ENCODE measurements at regions of chr15 and their contacts with region 1.

Region 1: GRCh38 chr15:82809404-82810060 is at the start of gene WHAMM:
- DNase-seq: peak; percentile 95
- H3K4me3 Mint-ChIP-seq: peak within 1 kb of the TSS; percentile 92
- H3K27ac Mint-ChIP-seq: peak within 1 kb of the TSS; percentile 94
- H3K4me1 Mint-ChIP-seq: peaks cover 34% of the 10 kb centered on the region
- H3K27me3 Mint-ChIP-seq: peaks cover 19% of the 10 kb centered on the region
- total RNA-seq, gene WHAMM: 7.1 and 7.5 TPM in 2 replicates

Region 2: DNA sequence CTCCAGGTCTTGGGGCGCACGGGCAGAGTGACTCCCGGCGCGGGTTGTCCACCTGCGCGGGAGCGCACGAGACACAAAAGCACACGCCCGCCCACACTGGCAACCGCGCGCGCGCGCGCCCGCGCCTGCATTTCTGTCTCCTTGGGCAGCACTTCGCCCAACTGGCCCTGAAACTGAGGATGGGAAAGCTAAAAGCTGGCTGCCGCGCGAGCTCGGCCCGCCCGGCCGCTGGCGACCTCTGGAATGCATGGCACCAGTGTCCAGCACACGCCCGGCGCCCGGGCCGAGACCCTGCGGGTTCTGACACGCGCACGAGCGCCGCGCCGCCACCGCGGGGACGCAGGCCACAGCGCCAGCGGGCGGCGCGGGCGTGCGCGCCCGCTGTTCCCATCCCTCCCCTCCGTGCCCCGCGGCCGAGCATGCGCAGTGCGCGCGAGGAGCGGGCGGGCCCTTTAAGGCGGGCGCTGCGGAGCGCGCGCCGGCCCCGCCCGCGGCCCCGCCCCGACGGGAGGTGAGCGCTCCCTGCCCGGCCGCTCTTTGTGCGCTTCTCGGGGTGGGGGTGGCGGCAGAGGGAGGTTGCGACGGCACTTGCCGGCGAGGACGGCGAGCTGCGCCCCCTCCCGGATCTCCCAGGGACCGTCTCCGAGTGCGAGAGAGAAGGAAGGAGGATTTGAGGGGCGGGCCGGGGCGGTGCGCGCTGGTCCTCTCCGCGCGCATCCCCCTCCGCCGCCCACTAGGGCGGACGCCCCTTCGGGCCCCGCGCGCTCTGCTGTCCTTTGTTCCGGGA is 762.7 kb before region 1 on chr15:
- intact Hi-C with region 1: loop called (anchors 2 kb)
- DNase-seq: peak; percentile 85
- H3K4me3 Mint-ChIP-seq: peak overlapping the region; percentile 89
- H3K27ac Mint-ChIP-seq: peak overlapping the region; percentile 79
- H3K4me1 Mint-ChIP-seq: peaks cover 12% of the 10 kb centered on the region
- H3K27me3 Mint-ChIP-seq: peaks cover 45% of the 10 kb centered on the region

Region 3: DNA sequence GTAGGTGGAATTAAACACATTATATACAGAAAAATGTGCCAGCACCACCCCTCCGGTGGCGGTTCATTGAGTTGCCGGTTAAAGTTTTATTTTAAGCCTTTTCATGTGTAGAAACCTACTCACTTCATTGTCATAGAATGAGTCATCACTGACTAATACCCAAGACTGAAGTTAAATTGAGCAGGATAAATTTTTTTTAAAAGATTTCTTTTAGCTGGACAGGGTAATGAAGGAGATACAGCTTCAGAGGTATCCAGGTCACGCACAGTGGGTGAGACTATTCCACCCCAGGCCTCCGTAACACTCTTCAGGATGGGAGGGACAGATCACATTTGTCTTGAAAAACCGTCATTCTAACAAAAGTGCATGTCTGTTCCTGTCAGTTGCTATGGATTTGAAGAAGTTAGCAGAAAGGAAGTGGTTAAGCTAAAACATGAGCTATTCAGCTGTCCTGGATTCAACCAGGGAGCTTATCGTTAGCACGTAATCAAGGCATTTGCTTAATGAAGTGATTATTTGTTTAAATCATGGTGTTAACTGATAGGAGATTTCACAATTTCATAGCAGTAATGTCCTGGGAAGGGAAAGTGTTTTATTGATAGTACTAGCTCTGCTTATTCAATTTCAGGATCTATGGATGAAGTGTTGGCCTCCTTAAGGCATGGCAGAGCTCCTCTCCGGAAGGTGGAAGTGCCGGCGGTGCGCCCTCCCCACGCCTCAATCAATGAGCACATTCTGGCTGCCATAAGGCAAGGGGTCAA is 23.2 kb after region 1 on chr15:
- intact Hi-C with region 1: loop called (anchors 1 kb)
- DNase-seq: peak; percentile 17
- H3K4me3 Mint-ChIP-seq: peak overlapping the region; percentile 57
- H3K27ac Mint-ChIP-seq: peak overlapping the region; percentile 87
- H3K4me1 Mint-ChIP-seq: peaks cover 54% of the 10 kb centered on the region
- H3K27me3 Mint-ChIP-seq: peaks cover 2% of the 10 kb centered on the region

Region 4: GRCh38 chr15:82985688-82986441 is 176.3 kb after region 1 on chr15 and contains the start of gene RAMAC:
- intact Hi-C with region 1: loop called (anchors 2 kb)
- DNase-seq: peak; percentile 86
- H3K4me3 Mint-ChIP-seq: peak within 1 kb of the TSS; percentile 98
- H3K27ac Mint-ChIP-seq: peak within 1 kb of the TSS; percentile 73
- H3K4me1 Mint-ChIP-seq: peaks cover 25% of the 10 kb centered on the region
- H3K27me3 Mint-ChIP-seq: no peaks in the 10 kb centered on the region
- total RNA-seq, gene RAMAC: 26.1 and 27.3 TPM in 2 replicates

Region 5: GRCh38 chr15:83066734-83067637 is 257.5 kb after region 1 on chr15 and contains the start of gene BTBD1:
- intact Hi-C with region 1: loop called (anchors 5 kb)
- DNase-seq: peak; percentile 84
- H3K4me3 Mint-ChIP-seq: peak within 1 kb of the TSS; percentile 84
- H3K27ac Mint-ChIP-seq: peak within 1 kb of the TSS; percentile 83
- H3K4me1 Mint-ChIP-seq: peaks cover 32% of the 10 kb centered on the region
- H3K27me3 Mint-ChIP-seq: peaks cover 2% of the 10 kb centered on the region
- total RNA-seq, gene BTBD1: 61.7 and 61.8 TPM in 2 replicates

Region 6: GRCh38 chr15:83928392-83928734 is 1118.8 kb after region 1 on chr15:
- intact Hi-C with region 1: loop called (anchors 5 kb)
- DNase-seq: no peak
- H3K4me3 Mint-ChIP-seq: peak overlapping the region; percentile 1
- H3K27ac Mint-ChIP-seq: peak overlapping the region; percentile 88
- H3K4me1 Mint-ChIP-seq: peaks cover 20% of the 10 kb centered on the region
- H3K27me3 Mint-ChIP-seq: peaks cover 1% of the 10 kb centered on the region